Activated CD8-positive, alpha-beta T cell treated with anti-CD3 and anti-CD28 coated beads, Interleukin-2, amount 10 ng/mL, durations not matched to agents 7 days and 5 days (primary cell): ENCODE measurements at regions of chr9 and their contacts with region 1.

Region 1: GRCh38 chr9:94065535-94065961 is 18.7 kb upstream of the PTPDC1 start:
- DNase-seq: peak; percentile 85
- ATAC-seq: peak; percentile 67
- H3K4me3 Mint-ChIP-seq: no peak overlapping the region
- H3K27ac Mint-ChIP-seq: no peak overlapping the region
- H3K4me1 Mint-ChIP-seq: peaks cover 4% of the 10 kb centered on the region
- H3K27me3 Mint-ChIP-seq: no peaks in the 10 kb centered on the region

Region 2: GRCh38 chr9:93575796-93576257 is 489.7 kb before region 1 on chr9:
- CTCF ChIA-PET with region 1: no interaction called
- POLR2A ChIA-PET with region 1: no interaction called
- DNase-seq: peak; percentile 73
- ATAC-seq: peak; percentile 60
- H3K4me3 Mint-ChIP-seq: peak overlapping the region; percentile 85
- H3K27ac Mint-ChIP-seq: peak overlapping the region; percentile 92
- H3K4me1 Mint-ChIP-seq: peaks cover 33% of the 10 kb centered on the region
- H3K27me3 Mint-ChIP-seq: no peaks in the 10 kb centered on the region

Region 3: GRCh38 chr9:93994545-93994944 is 71.0 kb before region 1 on chr9:
- CTCF ChIA-PET with region 1: no interaction called
- POLR2A ChIA-PET with region 1: no interaction called
- DNase-seq: no peak
- ATAC-seq: no peak
- H3K4me3 Mint-ChIP-seq: no peak overlapping the region
- H3K27ac Mint-ChIP-seq: no peak overlapping the region
- H3K4me1 Mint-ChIP-seq: no peaks in the 10 kb centered on the region
- H3K27me3 Mint-ChIP-seq: peaks cover 27% of the 10 kb centered on the region

Region 4: GRCh38 chr9:94079236-94079635 is 13.7 kb after region 1 on chr9:
- CTCF ChIA-PET with region 1: interaction called, 17 read pairs
- POLR2A ChIA-PET with region 1: no interaction called
- DNase-seq: no peak
- ATAC-seq: no peak
- H3K4me3 Mint-ChIP-seq: no peak overlapping the region
- H3K27ac Mint-ChIP-seq: no peak overlapping the region
- H3K4me1 Mint-ChIP-seq: peaks cover 7% of the 10 kb centered on the region
- H3K27me3 Mint-ChIP-seq: no peaks in the 10 kb centered on the region